Pancreas (tissue), 10 donors: ENCODE measurements at regions of chr18 and their contacts with region 1.

Region 1: DNA sequence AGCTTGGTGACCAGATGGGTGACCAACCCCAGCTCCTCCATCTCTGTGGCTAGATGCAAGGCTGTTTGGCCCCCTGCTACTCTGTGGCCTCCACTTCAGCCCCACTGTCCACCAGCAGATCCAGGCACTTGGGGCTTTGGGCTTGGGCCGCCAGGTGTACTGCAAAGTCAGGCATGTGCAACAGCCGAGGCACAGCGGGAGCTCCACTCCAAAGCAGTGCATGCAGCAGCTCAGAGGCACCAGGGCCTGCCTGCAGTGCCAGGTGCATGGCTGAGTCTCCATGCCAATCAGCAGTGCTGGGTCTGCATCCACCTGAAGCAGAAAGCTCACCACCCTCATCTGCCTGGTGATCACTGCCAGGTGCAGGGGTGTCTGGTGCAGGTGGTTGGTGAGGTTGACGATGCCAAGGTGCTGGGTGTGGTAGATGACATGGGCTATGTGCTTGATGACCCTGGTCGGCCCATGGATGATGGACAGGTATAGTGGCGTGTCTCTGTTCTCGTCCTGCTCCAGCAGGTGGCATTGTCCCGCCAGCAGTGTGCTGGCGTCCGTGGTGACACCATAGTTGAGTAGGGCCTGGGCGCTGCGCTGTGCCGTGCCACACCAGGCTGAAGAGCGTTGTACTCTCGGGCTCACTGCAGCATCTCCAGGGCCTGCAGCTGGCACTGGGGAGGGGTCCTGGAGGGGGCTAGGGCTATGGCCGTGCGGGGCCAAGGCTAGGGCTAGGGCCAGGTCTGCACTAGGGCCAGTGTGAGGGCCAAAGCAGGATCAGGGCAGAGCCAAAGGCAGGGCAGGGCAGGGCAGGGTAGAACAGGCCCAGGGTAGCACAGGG is 1.0 kb upstream of the ANKRD62 start:
- DNase-seq: peak; percentile 70 to 91 (median 80)
- ATAC-seq: peak; percentile 82 to 91 (median 86)
- H3K4me3 ChIP-seq: no peak overlapping the region
- H3K27ac ChIP-seq: peak overlapping the region in 3 of 4 donors; percentile 10 to 39 (median 18)
- H3K4me1 ChIP-seq: peaks cover 9 to 17% (median 11%) of the 10 kb centered on the region in 3 donors
- H3K27me3 ChIP-seq: no peaks in the 10 kb centered on the region
- CTCF ChIP-seq: peak in 3 of 4 donors; percentile 26 to 34 (median 28)

Region 2: DNA sequence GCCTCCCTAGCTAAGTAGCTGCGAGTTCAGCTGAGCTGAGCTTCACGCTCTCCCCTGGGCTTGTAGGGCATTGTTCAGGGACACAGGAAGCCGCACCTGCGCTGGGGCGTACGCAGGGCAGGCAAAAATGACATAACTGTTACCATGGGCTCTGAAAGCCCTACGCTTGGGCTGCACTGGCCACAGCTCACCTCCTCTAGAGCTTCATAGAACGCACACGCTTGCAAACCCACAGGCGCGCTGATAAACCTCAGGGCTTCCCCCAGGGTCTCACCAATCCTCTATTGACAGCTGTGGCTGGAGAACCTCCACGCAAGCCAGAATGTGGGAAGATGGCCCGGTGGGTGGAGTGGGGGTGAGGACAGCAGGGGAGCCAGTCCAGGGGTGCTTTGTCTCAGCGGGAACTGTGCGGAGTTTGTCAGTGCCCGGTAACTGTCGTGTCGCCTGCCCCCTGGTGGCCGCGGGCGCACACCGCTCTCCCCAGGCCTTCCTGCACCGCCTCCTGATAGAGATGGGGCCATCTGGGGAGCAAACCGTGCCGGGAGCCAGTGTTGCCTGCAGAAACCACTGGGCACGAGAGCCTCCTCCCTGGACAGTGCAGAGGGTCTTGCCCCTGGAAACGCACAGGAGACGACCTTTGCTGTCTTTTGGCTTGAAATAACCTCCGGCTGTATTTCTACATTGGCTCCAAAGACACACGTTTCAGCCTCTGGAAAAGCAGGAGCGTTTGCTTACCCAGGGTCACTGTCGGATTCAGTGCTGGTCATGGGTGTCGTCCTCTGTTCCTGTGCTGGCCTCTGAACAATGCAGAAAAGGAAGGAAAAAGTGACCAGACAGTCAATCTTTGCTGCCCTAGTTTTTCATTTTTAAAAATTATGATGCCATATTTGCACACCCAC is 144.6 kb after region 1 on chr18:
- intact Hi-C with region 1: loop called in 1 of 3 experiments (anchors 5 kb)
- DNase-seq: peak; percentile 66 to 96 (median 82)
- ATAC-seq: peak; percentile 98 to 100 (median 100)
- H3K4me3 ChIP-seq: peak overlapping the region in 1 of 4 donors; percentile 25
- H3K27ac ChIP-seq: no peak overlapping the region
- H3K4me1 ChIP-seq: no peaks in the 10 kb centered on the region
- H3K27me3 ChIP-seq: no peaks in the 10 kb centered on the region
- CTCF ChIP-seq: peak; percentile 90 to 97 (median 92)

Region 3: GRCh38 chr18:12391618-12392165 is 299.1 kb after region 1 on chr18:
- intact Hi-C with region 1: no loop called
- DNase-seq: peak in 4 of 6 donors; percentile 33 to 65 (median 42)
- ATAC-seq: peak; percentile 85 to 99 (median 98)
- H3K4me3 ChIP-seq: no peak overlapping the region
- H3K27ac ChIP-seq: no peak overlapping the region
- H3K4me1 ChIP-seq: no peaks in the 10 kb centered on the region
- H3K27me3 ChIP-seq: no peaks in the 10 kb centered on the region
- CTCF ChIP-seq: peak; percentile 42 to 88 (median 83)